OCI-LY7 (cell line): ENCODE measurements at regions of chr19 and their contacts with region 1.

Region 1: GRCh38 chr19:13807421-13808021 is 12.3 kb downstream of the ZSWIM4 start:
- DNase-seq: no peak
- H3K4me3 ChIP-seq: no peak overlapping the region
- H3K27ac ChIP-seq: no peak overlapping the region
- H3K4me1 ChIP-seq: no peaks in the 10 kb centered on the region
- CTCF ChIP-seq: no peak

Region 2: DNA sequence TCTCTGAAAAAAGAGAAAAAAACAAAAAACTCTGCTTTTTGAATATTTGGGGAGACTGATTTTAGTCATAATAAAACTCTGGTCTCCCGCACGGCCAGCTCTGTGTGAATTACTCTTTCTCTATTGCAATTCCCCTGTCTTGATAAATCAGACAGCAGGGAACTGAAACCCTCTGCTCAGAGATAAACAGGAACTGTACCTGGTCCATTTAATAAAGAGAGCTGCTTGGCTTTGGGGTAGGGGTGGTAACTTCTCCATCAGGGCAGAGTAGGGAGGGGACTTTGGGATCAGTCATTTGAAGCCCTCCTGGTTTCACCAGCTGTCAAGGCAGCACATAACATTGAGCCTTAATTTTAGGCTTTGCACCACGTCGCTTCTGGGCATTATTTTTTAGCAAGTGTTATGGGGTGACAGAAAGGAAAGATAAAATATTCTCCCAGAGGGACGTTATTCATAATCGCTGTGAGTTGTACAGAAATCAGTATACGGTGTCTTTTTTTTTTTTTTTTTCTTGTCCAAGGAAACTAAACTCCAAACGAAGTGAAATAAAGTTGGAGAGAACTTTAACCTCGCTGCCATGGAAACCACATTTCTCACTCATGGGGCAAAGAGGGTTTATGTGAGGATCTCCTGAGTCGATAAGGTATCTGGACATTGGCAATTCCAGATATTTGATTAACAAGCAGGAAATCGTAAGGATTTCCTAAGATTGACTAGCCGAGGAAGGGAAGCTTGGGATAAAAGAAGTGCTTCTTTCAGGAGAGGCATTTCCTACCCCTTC is 142.2 kb before region 1 on chr19:
- CTCF ChIA-PET with region 1: interaction called, 21 read pairs
- POLR2A ChIA-PET with region 1: no interaction called
- intact Hi-C with region 1: no loop called
- DNase-seq: peak; percentile 59
- H3K4me3 ChIP-seq: no peak overlapping the region
- H3K27ac ChIP-seq: no peak overlapping the region
- H3K4me1 ChIP-seq: peaks cover 8% of the 10 kb centered on the region
- CTCF ChIP-seq: no peak